Right cardiac atrium (tissue), 5 donors: ENCODE measurements at regions of chr18 and their contacts with region 1.

Region 1: DNA sequence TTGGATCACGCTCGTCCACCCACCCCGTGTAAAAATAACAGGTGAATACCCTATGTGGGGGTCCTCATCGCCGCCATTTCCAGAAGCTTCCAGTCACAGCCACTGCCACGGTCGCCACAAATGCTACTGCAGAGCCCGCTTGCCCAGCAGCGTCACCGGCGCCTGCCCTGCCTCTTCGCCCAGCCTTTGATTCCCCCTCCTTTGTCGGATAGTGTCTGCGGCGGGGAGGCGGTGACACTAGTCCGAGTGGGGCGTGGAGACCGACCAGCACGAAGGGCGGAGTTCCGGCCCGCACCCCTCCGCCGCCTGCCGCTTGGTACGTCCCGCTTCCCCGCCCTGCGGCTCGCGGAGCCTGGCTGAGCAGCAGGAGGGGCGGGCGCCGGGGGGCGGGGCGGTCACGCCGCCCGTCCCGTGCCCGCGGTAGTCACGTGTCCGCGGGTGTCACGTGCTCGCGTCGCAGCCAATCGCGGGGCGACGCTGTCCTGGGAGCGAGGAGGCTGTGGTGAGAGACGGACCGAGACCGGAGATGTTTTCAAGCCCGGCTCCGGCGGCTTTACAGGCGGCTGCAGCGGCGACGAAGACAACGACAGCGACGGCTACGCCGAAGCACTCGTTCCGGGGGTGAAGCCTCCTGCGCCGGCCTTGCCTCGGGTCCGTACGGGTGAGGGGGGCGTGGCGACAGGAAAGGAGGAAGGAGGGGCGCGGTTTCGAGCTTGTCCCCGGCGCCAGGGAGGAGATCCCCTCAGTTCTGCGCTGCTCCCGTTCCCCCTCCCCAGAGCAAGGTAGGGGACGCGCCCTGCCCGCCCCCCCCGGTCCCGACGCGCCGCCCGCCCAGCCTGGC is at the start of gene ANKRD12:
- DNase-seq: peak; percentile 97 to 99 (median 98)
- ATAC-seq: peak; percentile 98
- H3K4me3 ChIP-seq: peak within 1 kb of the TSS; percentile 65
- H3K27ac ChIP-seq: peak within 1 kb of the TSS; percentile 99
- H3K4me1 ChIP-seq: no peaks in the 10 kb centered on the region
- H3K27me3 ChIP-seq: no peaks in the 10 kb centered on the region
- total RNA-seq, gene ANKRD12: 47.3 to 59.6 (median 51.3) TPM

Region 2: GRCh38 chr18:9102508-9103375 is 33.8 kb before region 1 on chr18 and contains the start of gene NDUFV2:
- intact Hi-C with region 1: loop called in 1 of 4 experiments (anchors 5 kb)
- DNase-seq: peak; percentile 98 to 99 (median 99)
- ATAC-seq: peak; percentile 99
- H3K4me3 ChIP-seq: peak within 1 kb of the TSS; percentile 97
- H3K27ac ChIP-seq: peak within 1 kb of the TSS; percentile 90
- H3K4me1 ChIP-seq: peaks cover 2% of the 10 kb centered on the region
- H3K27me3 ChIP-seq: no peaks in the 10 kb centered on the region
- total RNA-seq, gene NDUFV2: 283 to 340 (median 304) TPM

Region 3: DNA sequence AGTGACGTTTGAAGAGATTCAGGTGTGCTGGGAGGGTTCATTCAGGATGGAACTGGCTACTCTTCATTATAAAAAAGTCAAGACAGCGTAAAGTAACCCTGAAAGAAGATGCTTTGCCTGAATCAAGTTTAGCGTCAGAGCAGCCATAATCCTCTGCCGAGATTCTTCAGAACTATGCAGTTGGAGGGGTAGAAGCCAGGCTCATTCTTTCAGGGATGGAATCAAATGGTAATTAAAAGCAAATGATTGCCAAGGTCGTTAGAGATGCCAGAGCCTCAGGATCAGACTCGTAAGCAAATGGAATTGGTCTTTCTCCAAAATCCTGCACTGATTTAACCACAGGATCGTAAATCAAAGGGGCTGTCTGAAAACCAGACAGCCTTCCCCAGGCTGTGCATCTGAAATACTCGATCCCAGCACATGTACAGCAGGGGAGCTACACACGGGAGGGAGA is 1339.8 kb after region 1 on chr18:
- intact Hi-C with region 1: no loop called
- DNase-seq: no peak
- ATAC-seq: no peak
- H3K4me3 ChIP-seq: no peak overlapping the region
- H3K27ac ChIP-seq: no peak overlapping the region
- H3K4me1 ChIP-seq: peaks cover 3% of the 10 kb centered on the region
- H3K27me3 ChIP-seq: no peaks in the 10 kb centered on the region